Calu3 (cell line): ENCODE measurements at regions of chr7 and their contacts with region 1.

Region 1: GRCh38 chr7:149742075-149742701 is 31.2 kb downstream of the ZNF467 start:
- DNase-seq: peak; percentile 79
- H3K4me3 Mint-ChIP-seq: peak overlapping the region; percentile 56
- H3K27ac Mint-ChIP-seq: peak overlapping the region; percentile 4
- H3K4me1 Mint-ChIP-seq: peaks cover 8% of the 10 kb centered on the region
- H3K27me3 Mint-ChIP-seq: no peaks in the 10 kb centered on the region
- CTCF ChIP-seq: peak; percentile 82

Region 2: GRCh38 chr7:149440222-149440621 is 302.0 kb before region 1 on chr7:
- CTCF ChIA-PET with region 1: no interaction called
- intact Hi-C with region 1: no loop called
- DNase-seq: no peak
- H3K4me3 Mint-ChIP-seq: no peak overlapping the region
- H3K27ac Mint-ChIP-seq: no peak overlapping the region
- H3K4me1 Mint-ChIP-seq: no peaks in the 10 kb centered on the region
- H3K27me3 Mint-ChIP-seq: no peaks in the 10 kb centered on the region
- CTCF ChIP-seq: no peak

Region 3: DNA sequence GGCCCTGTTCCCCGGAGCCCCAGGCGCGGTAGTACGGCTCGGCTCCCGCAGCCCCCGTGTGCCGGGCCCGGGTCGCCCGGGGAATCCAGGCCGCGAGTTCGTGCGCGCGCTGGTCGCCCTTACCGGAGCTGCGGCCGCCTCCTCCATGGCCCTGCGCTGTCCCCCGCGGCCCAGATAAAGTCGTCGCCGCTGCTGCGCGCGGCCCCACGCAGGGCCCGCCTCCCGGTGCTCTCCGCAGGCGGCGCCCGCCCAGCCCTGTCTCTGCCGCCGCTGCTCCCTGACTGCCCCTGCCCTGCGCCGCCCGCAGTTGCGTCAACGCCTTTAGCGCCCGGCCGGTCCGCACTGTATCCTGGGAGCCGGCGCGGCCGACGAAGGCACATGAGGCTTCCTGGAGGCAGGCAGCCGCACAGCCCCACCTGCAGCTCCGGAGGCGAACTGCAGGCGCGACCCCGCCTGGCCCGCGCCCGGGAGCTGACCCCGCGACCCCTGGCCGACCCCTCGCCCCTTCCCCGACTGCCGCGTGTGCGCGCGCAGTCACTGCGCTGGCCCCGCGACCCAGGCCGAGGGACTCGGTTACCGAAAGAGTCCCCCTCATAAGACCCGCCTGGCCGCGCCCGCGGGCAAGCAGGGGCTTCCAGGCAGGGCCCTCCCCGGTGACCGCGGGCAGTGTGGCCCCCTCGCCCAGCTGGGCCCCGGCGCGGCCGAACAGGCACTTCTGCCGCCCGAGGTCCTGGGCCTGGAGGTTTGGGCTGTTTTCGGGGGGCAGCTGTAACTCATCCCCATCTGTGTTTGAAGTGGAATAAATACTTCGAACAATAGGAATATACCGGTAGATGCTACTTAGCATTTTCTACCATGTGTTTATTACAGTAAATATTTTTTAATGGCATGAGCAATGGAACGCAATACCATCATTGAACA is 117.5 kb before region 1 on chr7:
- CTCF ChIA-PET with region 1: interaction called, 4 read pairs
- intact Hi-C with region 1: loop called (anchors 5 kb)
- DNase-seq: peak; percentile 92
- H3K4me3 Mint-ChIP-seq: peak overlapping the region; percentile 96
- H3K27ac Mint-ChIP-seq: no peak overlapping the region
- H3K4me1 Mint-ChIP-seq: no peaks in the 10 kb centered on the region
- H3K27me3 Mint-ChIP-seq: peaks cover 27% of the 10 kb centered on the region
- CTCF ChIP-seq: peak; percentile 92

Region 4: GRCh38 chr7:149662591-149663095 is 79.5 kb before region 1 on chr7:
- CTCF ChIA-PET with region 1: interaction called, 86 read pairs
- intact Hi-C with region 1: loop called (anchors 1 kb)
- DNase-seq: peak; percentile 88
- H3K4me3 Mint-ChIP-seq: no peak overlapping the region
- H3K27ac Mint-ChIP-seq: no peak overlapping the region
- H3K4me1 Mint-ChIP-seq: peaks cover 11% of the 10 kb centered on the region
- H3K27me3 Mint-ChIP-seq: peaks cover 68% of the 10 kb centered on the region
- CTCF ChIP-seq: peak; percentile 58

Region 5: GRCh38 chr7:149669121-149669818 is 72.9 kb before region 1 on chr7:
- CTCF ChIA-PET with region 1: interaction called, 10 read pairs
- intact Hi-C with region 1: loop called (anchors 1 kb)
- DNase-seq: no peak
- H3K4me3 Mint-ChIP-seq: no peak overlapping the region
- H3K27ac Mint-ChIP-seq: no peak overlapping the region
- H3K4me1 Mint-ChIP-seq: peaks cover 11% of the 10 kb centered on the region
- H3K27me3 Mint-ChIP-seq: peaks cover 67% of the 10 kb centered on the region
- CTCF ChIP-seq: peak; percentile 22